Caco-2 (cell line): ENCODE measurements at regions of chr22 and their contacts with region 1.

Region 1: DNA sequence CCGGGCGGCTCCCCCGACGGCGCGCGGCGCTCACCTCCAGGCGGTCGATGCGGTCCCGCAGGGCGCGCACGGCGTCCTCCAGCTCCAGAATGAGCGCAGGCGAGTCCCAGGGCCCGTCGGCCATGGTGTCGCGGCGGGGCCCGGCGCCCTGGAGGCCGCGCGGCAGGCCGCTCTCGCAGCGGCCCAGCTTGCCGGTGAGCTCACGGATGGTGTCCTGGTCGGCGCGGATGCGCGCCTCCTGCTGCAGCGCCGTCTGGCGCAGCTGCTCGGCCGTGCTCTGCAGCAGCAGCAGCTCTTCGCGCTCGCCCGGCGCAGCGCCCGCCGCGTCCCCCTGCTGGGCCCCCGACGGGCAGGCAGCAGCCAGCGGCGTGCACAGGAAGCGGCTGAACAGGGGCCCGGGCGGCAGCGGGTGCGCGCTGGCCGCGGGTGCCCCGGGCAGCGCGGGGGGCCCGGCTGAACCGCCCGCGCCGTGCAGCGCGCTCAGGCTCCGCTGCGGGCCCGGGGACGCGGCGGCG is 570 bp downstream of the NPTXR start:
- DNase-seq: peak; percentile 58 to 79
- H3K4me3 ChIP-seq: peak overlapping the region; percentile 57
- H3K4me3 Mint-ChIP-seq: peak overlapping the region; percentile 84
- H3K27ac Mint-ChIP-seq: no peak overlapping the region
- H3K4me1 ChIP-seq: peaks cover 13% of the 10 kb centered on the region
- H3K4me1 Mint-ChIP-seq: no peaks in the 10 kb centered on the region
- H3K27me3 ChIP-seq: no peaks in the 10 kb centered on the region
- H3K27me3 Mint-ChIP-seq: peaks cover 4% of the 10 kb centered on the region
- CTCF ChIP-seq: peak; percentile 12 to 27

Region 2: DNA sequence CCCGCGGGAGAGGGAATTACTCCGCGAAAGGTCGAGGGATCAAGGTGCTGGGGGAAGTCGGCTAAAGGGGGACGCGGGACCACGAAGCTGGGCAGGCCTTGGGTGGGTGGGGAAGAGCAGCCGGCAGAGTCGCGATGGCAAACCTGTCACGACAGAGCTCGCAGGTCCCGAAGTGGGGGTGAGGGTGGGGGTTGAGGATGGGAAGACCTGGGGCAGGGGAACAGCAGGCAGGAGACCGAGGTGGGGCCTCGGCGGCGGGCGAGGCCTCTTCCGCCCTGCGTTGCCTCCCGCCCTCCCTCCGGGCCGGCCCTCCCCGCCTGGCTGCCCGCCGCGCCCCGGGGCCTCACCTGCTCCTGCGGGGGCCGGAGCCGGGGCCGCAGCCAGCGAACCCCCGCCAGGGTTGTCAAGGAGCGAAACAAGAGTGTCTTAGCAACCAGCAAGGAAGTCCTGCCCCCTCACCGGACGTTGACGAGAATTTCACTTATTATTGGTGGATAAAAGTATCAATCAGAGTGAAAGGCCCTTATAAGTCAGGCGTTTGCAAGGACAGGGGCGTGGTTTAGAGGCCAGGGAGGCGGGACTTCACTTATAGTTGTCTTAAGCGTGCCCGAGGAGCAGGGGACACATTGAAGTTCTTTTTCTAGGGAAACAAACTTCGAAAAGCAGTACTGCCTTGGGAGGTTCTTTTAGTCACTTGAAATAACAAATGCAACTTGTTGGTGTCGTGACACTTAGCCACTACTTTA is 49.4 kb before region 1 on chr22 and contains the start of gene DNAL4:
- CTCF ChIA-PET with region 1: no interaction called
- POLR2A ChIA-PET with region 1: no interaction called
- intact Hi-C with region 1: loop called (anchors 1 kb)
- DNase-seq: peak; percentile 94 to 95
- H3K4me3 ChIP-seq: peak within 1 kb of the TSS; percentile 90
- H3K4me3 Mint-ChIP-seq: peak within 1 kb of the TSS; percentile 85
- H3K27ac Mint-ChIP-seq: peak within 1 kb of the TSS; percentile 71
- H3K4me1 ChIP-seq: peaks cover 8% of the 10 kb centered on the region
- H3K4me1 Mint-ChIP-seq: no peaks in the 10 kb centered on the region
- H3K27me3 ChIP-seq: no peaks in the 10 kb centered on the region
- H3K27me3 Mint-ChIP-seq: peaks cover 21% of the 10 kb centered on the region
- CTCF ChIP-seq: no peak
- total RNA-seq, gene DNAL4: 8.1 and 9.2 TPM in 2 replicates